ENCODE measurements at regions of chr17 and their contacts with region 1.

Region 1: GRCh38 chr17:39980351-39981206 is at the start of gene PSMD3:
- DNase-seq: peak; percentile 97 to 100
- ATAC-seq: peak; percentile 91 to 94
- H3K4me3 ChIP-seq: peak within 1 kb of the TSS; percentile 89
- H3K27ac ChIP-seq: peak within 1 kb of the TSS; percentile 93 to 95
- H3K4me1 ChIP-seq: peaks cover 20% of the 10 kb centered on the region
- CTCF ChIP-seq: peak; percentile 79
- EP300 ChIP-seq: no peak
- POLR2A ChIP-seq: peak; percentile 87
- RAD21 ChIP-seq: peak; percentile 79 to 85
- polyA plus RNA-seq, gene PSMD3: 87.7 and 113 TPM in 2 replicates

Region 2: DNA sequence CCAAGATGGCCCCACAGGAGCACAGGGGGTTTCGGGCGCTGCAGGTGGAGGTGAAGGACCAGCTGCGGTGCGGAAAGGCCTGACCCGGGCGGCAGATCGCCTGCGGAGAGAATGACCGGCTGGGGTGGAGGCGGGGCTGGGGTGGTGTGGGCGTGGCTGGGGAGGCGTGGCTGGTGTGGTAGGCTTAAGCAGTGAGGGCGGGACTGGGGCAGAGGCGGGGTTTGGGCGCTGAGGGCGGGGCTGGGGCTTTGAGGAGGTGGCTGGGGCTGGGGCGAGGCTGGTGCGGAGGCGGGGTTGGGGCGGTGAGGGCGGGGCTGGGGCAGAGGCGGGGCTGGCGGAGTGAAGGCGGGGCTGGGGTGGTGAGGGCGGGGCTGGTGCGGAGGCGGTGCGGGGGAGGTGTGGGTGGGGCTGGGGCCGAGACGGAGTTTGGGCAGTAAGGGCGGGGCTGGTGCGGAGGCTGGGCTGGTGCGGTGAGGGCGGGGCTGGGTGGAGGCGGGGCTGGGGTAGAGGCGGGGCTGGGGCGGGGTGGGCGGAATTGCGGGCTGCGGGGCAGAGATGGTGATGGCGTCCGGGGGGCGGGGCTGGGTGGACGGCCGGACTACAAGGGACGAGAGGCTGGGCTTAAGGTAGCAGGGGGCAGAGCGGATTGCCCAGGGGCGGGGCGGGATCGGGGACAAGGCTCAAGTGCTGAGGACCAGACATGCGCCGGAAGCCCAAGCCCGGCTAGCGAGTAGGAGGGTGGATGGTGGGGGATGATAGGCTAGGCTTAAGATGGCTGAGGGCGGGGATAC is 27.7 kb before region 1 on chr17:
- CTCF ChIA-PET with region 1: interaction called, 405 read pairs
- POLR2A ChIA-PET with region 1: interaction called, 43 read pairs
- DNase-seq: peak; percentile 97 to 98
- ATAC-seq: peak; percentile 87 to 97
- H3K4me3 ChIP-seq: peak overlapping the region; percentile 42
- H3K27ac ChIP-seq: peak overlapping the region; percentile 66 to 88
- H3K4me1 ChIP-seq: peaks cover 10% of the 10 kb centered on the region
- CTCF ChIP-seq: no peak
- EP300 ChIP-seq: no peak
- POLR2A ChIP-seq: peak; percentile 74
- RAD21 ChIP-seq: no peak

Region 3: DNA sequence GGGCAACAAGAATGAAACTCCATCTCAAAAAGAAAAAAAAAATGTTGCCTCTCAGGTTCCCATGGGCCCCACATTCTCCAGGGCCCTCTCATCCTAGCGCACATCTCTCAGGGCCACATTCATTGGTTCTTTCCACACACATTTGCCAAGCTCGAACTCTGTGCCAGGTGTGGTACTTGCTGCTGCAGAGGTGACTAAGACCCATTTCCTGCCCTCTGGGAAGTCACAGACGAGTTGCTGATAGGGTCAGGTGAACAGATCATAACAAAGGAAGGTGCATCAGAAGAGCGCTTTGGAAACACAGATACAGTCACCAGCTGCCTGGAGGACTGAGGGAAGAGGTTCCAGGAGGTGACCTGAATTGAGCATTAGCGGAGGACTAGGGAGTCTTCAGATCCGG is 16.8 kb before region 1 on chr17:
- CTCF ChIA-PET with region 1: interaction called, 405 read pairs
- POLR2A ChIA-PET with region 1: interaction called, 43 read pairs
- DNase-seq: no peak
- ATAC-seq: no peak
- H3K4me3 ChIP-seq: no peak overlapping the region
- H3K27ac ChIP-seq: no peak overlapping the region
- H3K4me1 ChIP-seq: no peaks in the 10 kb centered on the region
- CTCF ChIP-seq: no peak
- EP300 ChIP-seq: no peak
- POLR2A ChIP-seq: no peak
- RAD21 ChIP-seq: no peak